Cardiac septum (tissue), 1 donor: ENCODE measurements at regions of chr10 and their contacts with region 1.

Region 1: DNA sequence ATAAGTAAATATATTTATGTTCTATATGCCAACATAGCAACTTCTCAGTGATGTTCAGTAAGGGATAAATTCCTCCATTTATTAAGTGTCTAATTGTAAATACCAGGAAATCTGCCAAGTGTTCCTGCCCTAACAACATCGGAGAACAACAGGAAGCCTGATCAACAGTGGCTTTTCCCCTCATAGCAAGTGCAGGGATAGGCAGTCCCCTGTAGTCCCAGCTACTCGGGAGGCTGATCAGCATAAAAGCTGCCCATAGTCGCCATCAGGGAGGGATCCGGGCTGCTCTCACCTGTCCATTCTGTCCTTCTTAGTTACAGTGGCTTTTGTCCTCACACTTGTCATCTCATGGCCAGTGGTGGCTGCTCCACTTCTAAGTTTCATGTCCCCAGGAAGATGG is 141.3 kb downstream of the IDE start:
- DNase-seq: no peak

Region 2: DNA sequence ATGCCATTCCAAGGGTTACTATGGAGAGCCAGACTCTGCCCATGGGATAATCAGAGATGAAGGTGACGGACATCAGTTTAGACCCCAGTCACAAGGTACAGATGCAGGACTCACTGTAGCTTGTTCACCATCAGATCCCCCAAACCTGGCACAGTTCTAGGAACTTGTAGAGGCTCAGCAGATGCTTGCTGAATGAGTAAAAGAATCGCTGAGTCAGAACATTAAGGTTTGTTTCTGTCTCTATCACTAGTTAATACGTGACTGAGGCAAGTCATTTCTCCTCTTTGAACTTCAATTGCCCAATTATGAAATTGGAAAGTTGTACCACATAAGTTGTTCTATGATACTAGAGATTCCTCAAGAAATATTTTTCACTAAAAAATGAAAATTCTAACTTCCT is 864.8 kb before region 1 on chr10:
- intact Hi-C with region 1: no loop called
- DNase-seq: no peak

Region 3: GRCh38 chr10:92082583-92083280 is 349.9 kb before region 1 on chr10:
- intact Hi-C with region 1: loop called (anchors 2 kb)
- DNase-seq: no peak

Region 4: GRCh38 chr10:92303096-92303495 is 129.5 kb before region 1 on chr10:
- intact Hi-C with region 1: no loop called
- DNase-seq: no peak

Region 5: DNA sequence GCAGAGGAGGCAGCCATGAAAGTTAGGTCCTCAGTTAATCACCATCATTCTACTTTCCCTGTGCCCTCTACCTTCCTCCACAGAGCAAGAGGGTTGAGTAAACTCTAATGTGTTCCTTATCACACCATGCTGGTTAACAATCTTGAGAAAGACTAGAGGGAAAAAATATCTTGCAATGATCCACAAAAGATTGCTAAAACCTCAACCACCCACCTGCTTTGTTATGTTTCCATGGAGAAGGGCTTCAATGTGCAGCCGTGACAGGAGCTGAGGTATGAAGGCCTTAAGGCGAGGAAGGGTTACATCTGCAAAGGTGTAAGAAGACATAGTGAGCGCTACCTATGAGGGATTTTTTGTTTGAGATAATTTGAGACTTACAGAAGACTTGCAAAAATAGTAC is 37.4 kb after region 1 on chr10:
- intact Hi-C with region 1: no loop called
- DNase-seq: no peak